Calu3 (cell line): ENCODE measurements at regions of chr2 and their contacts with region 1.

Region 1: GRCh38 chr2:237421542-237422116 is 7.7 kb upstream of the COL6A3 start:
- DNase-seq: peak; percentile 82
- H3K4me3 Mint-ChIP-seq: peak overlapping the region; percentile 31
- H3K27ac Mint-ChIP-seq: no peak overlapping the region
- H3K4me1 Mint-ChIP-seq: peaks cover 19% of the 10 kb centered on the region
- H3K27me3 Mint-ChIP-seq: peaks cover 92% of the 10 kb centered on the region
- CTCF ChIP-seq: peak; percentile 60

Region 2: DNA sequence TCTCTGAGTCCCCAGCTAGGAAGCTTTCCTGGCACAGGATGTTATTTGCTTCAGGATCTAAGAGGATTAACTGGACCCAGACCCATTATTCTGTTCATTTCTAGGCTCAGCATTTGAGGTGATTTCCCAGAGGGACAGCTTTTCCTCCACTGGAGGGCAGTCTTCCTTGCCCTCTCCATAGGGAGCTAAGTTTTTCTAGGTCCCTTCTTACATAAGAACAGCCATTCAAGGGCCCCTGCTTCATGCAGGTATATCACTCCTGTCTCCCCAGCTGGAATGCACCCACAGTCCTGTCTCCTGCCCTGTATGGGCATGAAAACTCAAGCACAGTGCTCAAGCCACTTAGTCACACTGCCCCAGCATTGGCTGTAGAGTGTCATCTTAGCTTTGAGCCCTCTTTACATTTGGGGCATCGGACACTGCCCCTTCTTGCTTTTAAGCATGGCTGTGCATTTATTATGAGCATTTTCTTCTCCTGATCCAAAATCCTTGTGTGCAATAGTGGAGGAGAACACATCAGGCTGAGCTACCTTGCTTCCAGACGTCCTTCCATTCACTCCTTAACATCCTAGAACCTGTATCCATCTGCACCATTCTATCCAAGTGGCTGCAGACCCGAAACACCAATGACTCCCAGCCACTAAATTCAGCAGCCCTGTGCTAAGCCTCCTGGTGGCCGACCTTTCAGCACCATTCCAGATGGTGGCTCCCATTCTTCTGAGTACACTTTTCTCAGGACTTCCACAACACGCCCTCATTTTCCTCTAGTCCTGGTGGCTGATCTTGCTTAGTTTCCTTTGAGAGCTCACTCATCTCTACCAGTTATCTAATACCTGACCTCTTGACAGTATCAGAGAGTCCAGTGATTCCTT is 256.0 kb before region 1 on chr2:
- CTCF ChIA-PET with region 1: interaction called, 10 read pairs
- intact Hi-C with region 1: no loop called
- DNase-seq: peak; percentile 52
- H3K4me3 Mint-ChIP-seq: no peak overlapping the region
- H3K27ac Mint-ChIP-seq: no peak overlapping the region
- H3K4me1 Mint-ChIP-seq: no peaks in the 10 kb centered on the region
- H3K27me3 Mint-ChIP-seq: peaks cover 48% of the 10 kb centered on the region
- CTCF ChIP-seq: peak; percentile 62

Region 3: DNA sequence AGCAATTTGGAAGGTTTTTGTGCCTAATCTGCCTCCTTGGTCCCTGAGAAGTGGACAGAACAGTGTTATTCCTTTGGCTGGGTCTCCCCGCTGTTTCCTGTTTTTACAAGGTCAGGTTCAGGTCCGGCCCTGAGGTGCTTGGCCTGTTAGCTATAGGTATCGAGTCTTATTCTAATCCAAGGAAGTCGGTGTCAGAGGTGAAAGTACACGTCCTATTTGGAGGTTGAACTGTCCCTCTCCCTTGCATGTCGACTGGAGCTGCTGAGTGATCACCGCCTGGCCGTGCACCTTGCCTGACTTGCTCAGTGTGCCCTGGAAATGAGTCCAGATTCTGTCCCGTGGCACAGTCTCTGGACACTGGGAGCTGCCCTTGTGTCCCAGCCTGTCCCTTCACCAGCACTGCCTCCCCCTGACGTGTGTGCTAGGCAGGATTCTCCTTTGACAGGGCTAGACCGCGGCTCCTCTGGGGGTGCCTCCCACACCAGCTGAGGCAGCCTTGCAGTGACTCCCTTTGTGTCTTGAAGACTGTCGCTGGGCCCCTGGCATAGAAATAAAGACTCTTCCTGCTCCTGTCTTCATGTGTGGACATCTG is 311.3 kb after region 1 on chr2:
- CTCF ChIA-PET with region 1: no interaction called
- intact Hi-C with region 1: no loop called
- DNase-seq: no peak
- H3K4me3 Mint-ChIP-seq: peak overlapping the region; percentile 60
- H3K27ac Mint-ChIP-seq: peak overlapping the region; percentile 74
- H3K4me1 Mint-ChIP-seq: peaks cover 58% of the 10 kb centered on the region
- H3K27me3 Mint-ChIP-seq: no peaks in the 10 kb centered on the region
- CTCF ChIP-seq: no peak